ENCODE measurements at regions of chr2 and their contacts with region 1.

Region 1: DNA sequence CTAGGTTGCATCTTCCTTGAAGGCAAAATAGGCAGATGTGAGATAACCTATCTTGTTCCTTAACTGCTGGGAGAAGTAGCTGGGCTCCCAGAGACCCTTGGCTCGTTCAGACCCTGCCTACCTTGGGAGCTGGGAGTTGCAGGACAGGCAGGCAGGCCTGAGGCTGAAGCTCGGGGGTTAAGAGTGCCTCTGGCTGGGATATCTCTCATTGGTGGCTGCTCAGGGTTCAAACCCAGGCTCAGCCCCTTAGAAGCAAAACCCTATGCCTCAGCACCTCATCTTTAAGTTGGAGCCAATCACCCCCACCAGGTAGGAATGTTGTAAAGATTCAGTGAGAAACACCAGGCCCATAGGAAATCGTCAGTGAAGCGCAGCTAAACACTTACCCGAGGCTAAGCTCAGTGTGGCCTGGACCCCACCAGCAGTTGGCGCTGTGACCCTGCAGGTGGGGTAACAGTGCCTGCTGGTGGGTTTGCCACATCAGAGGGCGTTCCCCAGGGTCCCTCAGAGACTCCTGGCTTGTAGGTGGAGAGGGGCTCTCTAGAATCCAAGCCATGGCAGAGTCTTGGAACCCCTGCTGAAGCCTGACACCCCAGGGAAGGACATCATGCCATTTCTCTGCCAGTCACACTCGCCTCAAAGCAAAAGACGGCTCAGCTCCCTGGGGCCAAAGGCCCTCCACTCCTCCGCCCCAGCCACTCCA is 54.6 kb upstream of the GPR17 start:
- DNase-seq: no peak
- H3K4me3 ChIP-seq: no peak overlapping the region
- CTCF ChIP-seq: peak; percentile 95

Region 2: DNA sequence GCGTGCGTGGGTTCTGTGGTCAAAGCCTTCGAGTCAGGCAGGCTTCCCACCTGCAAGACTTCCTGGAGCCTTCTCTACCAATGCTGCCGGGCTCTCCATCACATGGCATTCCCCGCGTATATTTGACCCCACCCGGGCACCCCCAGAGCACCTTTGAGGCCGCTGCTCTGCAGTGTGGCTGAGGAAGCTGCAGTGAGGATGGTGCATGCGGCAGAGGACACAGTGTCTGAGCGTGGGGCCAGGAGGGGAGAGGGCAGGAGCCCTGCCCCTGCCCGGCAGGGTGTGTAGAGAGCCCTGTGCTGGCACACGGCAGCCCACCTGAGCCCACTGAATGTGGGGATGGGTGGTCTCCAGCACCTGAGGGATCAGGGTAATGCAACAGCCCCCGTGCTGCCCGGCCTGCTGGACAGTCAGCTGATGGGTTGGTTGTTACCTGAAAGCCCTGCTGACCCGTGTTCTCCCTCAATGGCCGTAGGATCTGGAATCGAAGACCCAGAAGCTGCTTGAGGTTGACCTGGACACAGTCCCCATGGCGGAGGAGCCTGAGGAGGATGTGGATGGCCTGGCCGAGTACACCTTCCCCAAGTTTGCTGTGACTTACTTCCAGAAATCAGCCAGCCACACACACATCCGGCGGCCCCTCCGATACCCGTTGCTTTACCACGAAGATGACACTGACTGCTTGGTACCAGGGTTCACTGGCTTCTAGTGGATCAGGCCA is 17.8 kb after region 1 on chr2:
- CTCF ChIA-PET with region 1: interaction called, 52 read pairs
- POLR2A ChIA-PET with region 1: no interaction called
- DNase-seq: no peak
- H3K4me3 ChIP-seq: no peak overlapping the region
- CTCF ChIP-seq: no peak

Region 3: GRCh38 chr2:127637725-127638252 is 46.4 kb after region 1 on chr2:
- CTCF ChIA-PET with region 1: interaction called, 17 read pairs
- POLR2A ChIA-PET with region 1: no interaction called
- DNase-seq: no peak
- H3K4me3 ChIP-seq: no peak overlapping the region
- CTCF ChIP-seq: no peak

Region 4: DNA sequence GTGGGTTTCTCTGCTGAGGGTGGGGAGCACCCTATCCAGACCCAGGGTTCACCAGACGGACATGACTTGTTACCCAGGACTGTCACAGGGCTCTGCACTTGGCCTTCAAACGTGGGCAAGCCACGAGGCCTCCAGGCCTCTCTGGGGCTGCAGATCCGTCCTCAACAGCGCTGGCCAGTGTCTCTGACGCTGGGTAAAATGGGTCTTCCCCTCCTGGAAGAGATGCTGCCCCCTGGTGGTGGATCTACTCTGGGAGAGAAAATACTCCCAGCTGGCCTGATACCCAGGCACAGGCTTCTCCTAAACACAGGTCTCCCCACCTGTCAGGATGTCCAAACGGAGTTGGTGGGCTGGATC is 58.3 kb after region 1 on chr2:
- CTCF ChIA-PET with region 1: interaction called, 119 read pairs
- POLR2A ChIA-PET with region 1: interaction called, 3 read pairs
- DNase-seq: no peak
- H3K4me3 ChIP-seq: no peak overlapping the region
- CTCF ChIP-seq: peak; percentile 79

Region 5: DNA sequence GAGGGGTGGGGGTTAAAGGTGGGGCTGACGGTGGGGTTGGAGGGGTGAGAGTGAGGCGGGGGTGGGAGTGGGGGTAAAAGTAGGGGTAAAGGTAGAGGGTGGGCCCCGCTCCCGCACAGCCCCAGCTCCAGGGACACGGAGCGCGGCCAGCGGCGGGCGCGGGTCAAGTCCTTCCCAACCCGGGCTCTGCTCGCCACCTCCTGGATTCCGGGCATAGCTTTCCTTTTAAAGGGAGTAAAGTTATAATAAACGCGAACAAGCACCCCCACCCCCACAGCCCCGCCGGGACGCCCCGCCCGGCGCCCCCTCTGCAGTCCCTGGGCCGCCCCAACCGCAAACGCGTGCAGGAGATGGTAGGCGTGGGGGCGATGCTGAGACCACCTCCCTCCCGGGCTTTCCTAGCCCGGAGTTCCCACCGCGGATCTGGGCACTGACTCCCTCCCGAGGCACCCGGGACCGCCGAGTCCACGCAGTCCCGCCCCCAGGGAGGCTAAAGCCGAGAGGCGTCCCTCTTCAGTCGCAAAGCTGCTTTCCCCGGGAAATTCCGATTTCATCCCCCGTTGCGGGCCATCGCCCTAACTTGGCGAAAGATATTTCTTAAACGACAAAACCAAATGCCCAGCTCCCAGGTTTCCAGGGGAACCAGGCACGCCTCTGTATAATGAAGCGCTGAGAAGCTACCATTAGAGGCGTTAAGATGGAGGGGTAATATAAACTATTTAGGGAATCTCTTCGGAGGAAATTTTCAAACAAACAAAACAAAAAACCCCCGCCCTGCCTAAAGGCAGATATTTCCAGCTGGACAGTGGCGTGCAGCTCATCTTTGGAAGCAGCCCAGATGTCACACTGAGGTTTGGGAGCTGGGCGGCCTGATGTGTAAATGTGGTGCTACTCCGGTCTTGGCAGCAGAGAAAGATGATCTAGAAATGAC is 84.2 kb after region 1 on chr2 and contains the start of gene LIMS2:
- CTCF ChIA-PET with region 1: interaction called, 17 read pairs
- POLR2A ChIA-PET with region 1: no interaction called
- DNase-seq: no peak
- H3K4me3 ChIP-seq: peak within 1 kb of the TSS; percentile 68
- CTCF ChIP-seq: no peak

Measured in AG04449 (cell line).